Psoas muscle (tissue), 8 donors: ENCODE measurements at regions of chr12 and their contacts with region 1.

Region 1: DNA sequence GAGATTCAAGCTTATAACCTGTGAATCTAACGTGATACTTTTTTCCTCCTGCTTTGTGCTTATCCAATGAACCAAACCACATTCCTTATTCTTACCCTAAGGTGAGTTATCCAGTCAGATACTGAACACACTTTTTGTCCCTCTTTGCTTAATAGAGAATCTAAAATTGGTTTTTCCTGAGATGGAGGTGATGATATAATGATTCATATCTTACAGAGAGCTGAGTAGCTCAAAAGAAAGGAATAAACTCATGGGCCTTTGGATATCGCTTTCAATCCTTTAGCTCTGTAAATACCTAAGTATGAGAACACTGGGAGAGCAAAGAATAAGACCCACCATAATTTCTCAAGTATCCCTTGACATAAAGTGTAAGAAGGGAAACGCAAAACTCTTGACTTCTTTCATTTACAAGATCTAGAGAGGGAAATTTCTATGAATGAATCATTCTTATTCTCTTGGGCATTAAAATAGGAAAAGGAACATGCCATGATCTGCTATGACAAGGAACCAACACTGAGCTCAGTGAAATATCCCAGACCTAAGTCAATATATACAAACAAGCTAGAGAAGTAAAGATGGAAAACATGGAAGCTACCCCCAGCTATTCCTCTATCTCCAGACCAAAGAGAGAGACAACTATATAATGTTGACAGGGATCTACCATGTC is 81.8 kb upstream of the STAC3 start:
- DNase-seq: no peak
- ATAC-seq: no peak
- H3K4me3 ChIP-seq: no peak overlapping the region
- H3K27ac ChIP-seq: no peak overlapping the region
- H3K4me1 ChIP-seq: no peaks in the 10 kb centered on the region
- H3K27me3 ChIP-seq: no peaks in the 10 kb centered on the region
- CTCF ChIP-seq: no peak

Region 2: DNA sequence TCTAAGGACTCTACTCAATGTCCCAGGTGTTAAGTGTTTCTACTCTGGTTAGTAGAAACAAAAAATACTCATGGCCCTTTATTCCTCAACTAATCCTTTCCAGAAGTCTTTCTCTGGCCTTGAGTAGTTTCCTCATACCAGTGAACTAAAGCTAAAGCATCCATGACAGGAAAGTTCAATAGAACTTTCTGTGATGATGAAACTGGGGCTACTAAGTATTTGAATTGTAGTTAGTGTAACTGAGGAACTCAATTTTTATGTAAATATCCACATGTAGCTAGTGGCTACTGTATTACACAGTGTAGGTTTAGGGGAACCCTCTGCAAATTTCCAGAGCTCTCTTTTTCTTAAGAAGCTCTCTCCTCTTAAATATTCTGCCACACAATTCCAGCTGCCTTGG is 34.3 kb after region 1 on chr12:
- intact Hi-C with region 1: loop called in 1 of 2 experiments (anchors 2 kb)
- DNase-seq: no peak
- ATAC-seq: no peak
- H3K4me3 ChIP-seq: no peak overlapping the region
- H3K27ac ChIP-seq: no peak overlapping the region
- H3K4me1 ChIP-seq: peaks cover 4% of the 10 kb centered on the region
- H3K27me3 ChIP-seq: no peaks in the 10 kb centered on the region
- CTCF ChIP-seq: no peak